HepG2 (cell line): ENCODE measurements at regions of chr18 and their contacts with region 1.

Region 1: GRCh38 chr18:52694804-52695203 is 354.8 kb downstream of the DCC start:
- DNase-seq: no peak
- ATAC-seq: peak; percentile 37; the same call in 1 of the 3 replicates
- H3K4me3 ChIP-seq: no peak overlapping the region
- H3K27ac ChIP-seq: no peak overlapping the region
- H3K4me1 ChIP-seq: no peaks in the 10 kb centered on the region
- H3K27me3 ChIP-seq: no peaks in the 10 kb centered on the region
- CTCF ChIP-seq: no peak
- EP300 ChIP-seq: no peak
- POLR2A ChIP-seq: no peak
- RAD21 ChIP-seq: no peak

Region 2: GRCh38 chr18:52339891-52340371 is 354.9 kb before region 1 on chr18 and contains the start of gene DCC:
- CTCF ChIA-PET with region 1: no interaction called
- POLR2A ChIA-PET with region 1: no interaction called
- in situ Hi-C with region 1: no loop called
- intact Hi-C with region 1: loop called (anchors 10 kb)
- DNase-seq: peak; percentile 2
- ATAC-seq: peak; percentile 88
- H3K4me3 ChIP-seq: no peak within 1 kb of the TSS
- H3K27ac ChIP-seq: no peak within 1 kb of the TSS
- H3K4me1 ChIP-seq: no peaks in the 10 kb centered on the region
- H3K27me3 ChIP-seq: peaks cover 0 to 18% of the 10 kb centered on the region in 2 experiments; a peak in 2 of 5 replicates
- CTCF ChIP-seq: peak; percentile 53
- EP300 ChIP-seq: no peak
- POLR2A ChIP-seq: no peak
- RAD21 ChIP-seq: no peak
- total RNA-seq, gene DCC: not detected in 2 replicates